Ascending aorta (tissue), 2 donors: ENCODE measurements at regions of chr11 and their contacts with region 1.

Region 1: DNA sequence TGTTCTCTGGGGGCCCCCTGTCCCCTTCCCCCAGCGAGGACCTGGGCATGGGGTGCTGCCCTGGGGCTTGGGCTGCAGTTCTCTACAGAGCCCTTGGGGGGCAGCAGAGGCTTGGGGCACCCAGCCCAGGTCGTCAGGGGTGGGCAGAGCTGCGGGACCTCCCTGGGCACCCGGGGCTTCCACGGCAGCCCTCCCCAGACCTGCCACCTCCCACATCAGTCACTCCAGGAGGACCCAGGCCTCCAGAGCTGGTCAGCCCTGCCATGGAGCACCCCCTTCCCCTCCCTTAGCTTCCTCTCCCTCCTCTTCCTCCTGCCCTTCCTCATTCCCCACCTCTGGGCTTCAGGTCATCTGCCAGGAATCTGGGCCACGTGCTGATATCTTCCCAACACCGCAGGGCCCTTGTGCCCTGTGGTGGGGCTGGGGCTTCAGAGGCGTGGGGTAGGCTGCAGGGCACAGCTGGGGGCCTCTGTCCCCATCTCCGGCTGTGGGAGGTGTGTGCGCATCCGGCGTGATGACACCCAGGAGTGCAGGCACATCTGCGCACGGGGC is 5.8 kb downstream of the TSPAN4 start:
- DNase-seq: no peak
- H3K4me3 ChIP-seq: peak overlapping the region in 1 of 2 donors; percentile 71
- H3K27ac ChIP-seq: no peak overlapping the region
- H3K4me1 ChIP-seq: peaks cover 34 to 40% of the 10 kb centered on the region in 2 donors
- H3K27me3 ChIP-seq: no peaks in the 10 kb centered on the region
- CTCF ChIP-seq: peak; percentile 81 to 95 (median 94)

Region 2: GRCh38 chr11:827897-828192 is 20.6 kb before region 1 on chr11 and contains the start of gene CRACR2B:
- intact Hi-C with region 1: no loop called
- DNase-seq: no peak
- H3K4me3 ChIP-seq: peak within 1 kb of the TSS; percentile 58 to 60
- H3K27ac ChIP-seq: peak within 1 kb of the TSS in 1 of 2 donors; percentile 7
- H3K4me1 ChIP-seq: peaks cover 13 to 44% of the 10 kb centered on the region in 2 donors
- H3K27me3 ChIP-seq: no peaks in the 10 kb centered on the region
- CTCF ChIP-seq: no peak
- total RNA-seq, gene CRACR2B: 20.5 TPM

Region 3: GRCh38 chr11:910589-911195 is 62.2 kb after region 1 on chr11 and contains the start of gene CHID1:
- intact Hi-C with region 1: loop called (anchors 5 kb)
- DNase-seq: peak; percentile 29 to 92
- H3K4me3 ChIP-seq: peak within 1 kb of the TSS; percentile 86 to 98
- H3K27ac ChIP-seq: peak within 1 kb of the TSS; percentile 83 to 92
- H3K4me1 ChIP-seq: peaks cover 0 to 16% of the 10 kb centered on the region in 2 donors
- H3K27me3 ChIP-seq: no peaks in the 10 kb centered on the region
- CTCF ChIP-seq: no peak
- total RNA-seq, gene CHID1: 69.4 TPM

Region 4: DNA sequence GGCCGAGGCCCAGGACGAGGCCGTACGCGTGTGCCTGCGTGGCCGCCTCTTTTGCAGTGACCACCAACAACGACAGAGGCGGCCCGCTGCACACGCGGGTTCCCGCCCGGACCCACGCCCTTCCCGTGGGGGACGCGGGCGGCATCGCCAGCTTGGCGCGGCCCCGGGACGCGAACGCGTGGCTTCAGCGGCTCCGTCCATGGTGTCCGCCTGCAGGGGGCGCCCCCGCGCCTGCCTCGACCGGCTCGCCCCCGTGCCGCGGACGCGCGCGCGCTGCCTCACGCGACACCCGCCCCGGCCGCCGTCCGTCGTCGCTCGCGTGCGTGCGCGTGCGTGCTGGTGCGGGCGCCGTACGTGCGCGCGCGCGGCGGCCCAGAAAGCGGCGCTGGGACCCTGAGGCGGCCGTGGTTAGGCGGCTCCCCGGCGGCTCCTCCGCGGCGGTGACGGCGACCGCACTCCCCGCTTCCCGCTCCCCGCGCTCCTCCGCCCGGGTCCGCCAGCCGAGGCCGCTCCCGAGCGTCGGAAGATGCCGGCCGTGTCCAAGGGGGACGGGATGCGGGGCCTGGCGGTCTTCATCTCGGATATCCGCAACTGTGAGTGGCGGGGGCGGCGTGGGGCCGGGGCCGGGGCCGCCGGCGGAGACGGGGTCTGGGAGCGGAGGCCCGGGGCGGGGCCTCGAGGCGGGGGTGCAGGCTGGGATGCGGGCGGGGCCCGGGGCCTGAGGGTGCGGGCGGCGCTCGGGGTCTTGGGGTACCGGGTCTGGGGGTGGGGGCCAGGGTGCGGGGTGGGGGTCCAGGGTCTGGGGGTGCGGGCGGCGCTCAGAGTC is 77.3 kb after region 1 on chr11 and contains the start of gene AP2A2:
- intact Hi-C with region 1: loop called (anchors 5 kb)
- DNase-seq: peak; percentile 40 to 93
- H3K4me3 ChIP-seq: peak within 1 kb of the TSS; percentile 82 to 100
- H3K27ac ChIP-seq: peak within 1 kb of the TSS; percentile 86 to 89
- H3K4me1 ChIP-seq: peaks cover 0 to 15% of the 10 kb centered on the region in 2 donors
- H3K27me3 ChIP-seq: no peaks in the 10 kb centered on the region
- CTCF ChIP-seq: peak; percentile 49 to 98 (median 65)
- total RNA-seq, gene AP2A2: 118 TPM

Region 5: DNA sequence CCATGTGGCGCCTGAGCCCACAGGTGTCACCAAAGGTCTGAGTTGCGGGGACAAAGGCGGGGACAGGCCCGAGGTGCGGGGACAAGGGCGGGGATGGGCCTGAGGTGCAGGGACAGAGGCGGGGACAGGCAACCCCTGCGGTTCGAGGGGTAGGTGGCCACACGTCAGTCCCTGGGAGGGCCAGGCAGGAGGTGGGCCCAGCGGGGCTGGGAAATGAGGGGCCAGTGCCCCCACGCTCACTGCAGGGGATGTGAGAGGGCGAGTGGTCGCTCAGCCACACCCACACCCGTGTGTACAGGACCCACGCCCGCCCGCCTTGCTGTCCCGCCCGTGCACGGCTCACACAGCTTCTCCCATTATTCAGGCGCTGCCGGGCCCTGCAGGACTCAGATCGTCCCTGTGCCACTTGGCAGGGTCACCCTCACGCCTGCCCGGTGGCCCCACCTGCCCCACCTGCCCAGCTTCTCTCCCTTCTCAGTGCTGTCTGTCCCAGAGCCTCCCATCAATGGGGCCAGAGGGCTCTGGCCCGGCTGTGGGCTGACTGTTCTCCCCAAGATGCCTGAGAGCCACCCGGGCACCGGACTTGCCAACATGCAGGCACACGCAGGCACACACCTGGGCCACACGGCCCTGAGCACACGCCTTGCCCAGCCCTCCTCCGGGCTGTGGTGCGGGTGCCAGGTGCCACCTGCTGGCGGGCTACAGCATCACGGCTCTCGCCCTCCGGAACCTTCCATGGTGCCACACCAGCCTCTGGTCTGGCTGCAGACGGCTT is 202.3 kb after region 1 on chr11:
- intact Hi-C with region 1: loop called (anchors 1 kb)
- DNase-seq: no peak
- H3K4me3 ChIP-seq: no peak overlapping the region
- H3K27ac ChIP-seq: no peak overlapping the region
- H3K4me1 ChIP-seq: no peaks in the 10 kb centered on the region
- H3K27me3 ChIP-seq: peaks cover 16% of the 10 kb centered on the region
- CTCF ChIP-seq: peak; percentile 49 to 83 (median 82)

Region 6: DNA sequence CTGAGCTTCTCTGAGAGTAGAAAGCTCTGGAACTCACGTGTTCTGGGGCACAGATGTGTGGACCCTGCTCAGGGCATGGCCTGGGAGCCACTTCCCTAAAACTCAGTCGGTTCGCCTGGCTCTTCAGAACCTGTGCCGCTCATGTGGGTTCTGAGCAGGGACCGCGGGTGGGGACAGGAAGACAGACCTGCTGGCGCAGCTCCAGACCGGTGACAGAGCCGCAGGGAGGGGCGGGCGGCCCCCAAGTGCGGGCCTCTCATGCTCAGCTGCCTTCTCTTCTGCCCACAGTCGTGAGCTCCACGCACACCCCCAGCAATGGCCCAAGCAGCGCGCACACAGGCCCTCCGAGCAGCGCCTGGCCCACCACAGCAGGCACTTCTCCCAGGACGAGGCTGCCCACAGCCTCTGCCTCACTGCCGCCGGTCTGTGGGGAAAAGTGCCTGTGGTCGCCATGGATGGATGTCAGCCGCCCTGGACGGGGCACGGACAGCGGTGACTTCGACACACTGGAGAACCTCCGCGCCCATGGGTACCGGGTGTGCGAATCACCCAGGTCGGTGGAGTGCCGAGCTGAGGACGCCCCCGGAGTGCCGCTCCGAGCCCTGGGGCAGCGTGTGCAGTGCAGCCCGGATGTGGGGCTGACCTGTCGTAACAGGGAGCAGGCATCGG is 333.5 kb after region 1 on chr11:
- intact Hi-C with region 1: no loop called
- DNase-seq: no peak
- H3K4me3 ChIP-seq: no peak overlapping the region
- H3K27ac ChIP-seq: no peak overlapping the region
- H3K4me1 ChIP-seq: no peaks in the 10 kb centered on the region
- H3K27me3 ChIP-seq: no peaks in the 10 kb centered on the region
- CTCF ChIP-seq: no peak